ENCODE measurements at regions of chr2 and their contacts with region 1.

Region 1: GRCh38 chr2:43595603-43596412 is at the start of gene THADA:
- DNase-seq: peak; percentile 99
- ATAC-seq: peak; percentile 97
- H3K4me3 ChIP-seq: peak within 1 kb of the TSS; percentile 68 to 83 (median 75)
- H3K27ac ChIP-seq: peak within 1 kb of the TSS; percentile 93
- H3K4me1 ChIP-seq: peaks cover 36% of the 10 kb centered on the region
- H3K27me3 ChIP-seq: no peaks in the 10 kb centered on the region; a peak in 1 of 5 replicates
- CTCF ChIP-seq: no peak
- EP300 ChIP-seq: peak in 1 of 2 experiments; percentile 36; a peak in 1 of 4 replicates
- POLR2A ChIP-seq: peak; percentile 99 to 100
- RAD21 ChIP-seq: 0 out of 2 replicates have a peak, but pooled peaks have one; percentile 36
- total RNA-seq, gene THADA: 21.7 and 30.9 TPM in 2 replicates

Region 2: DNA sequence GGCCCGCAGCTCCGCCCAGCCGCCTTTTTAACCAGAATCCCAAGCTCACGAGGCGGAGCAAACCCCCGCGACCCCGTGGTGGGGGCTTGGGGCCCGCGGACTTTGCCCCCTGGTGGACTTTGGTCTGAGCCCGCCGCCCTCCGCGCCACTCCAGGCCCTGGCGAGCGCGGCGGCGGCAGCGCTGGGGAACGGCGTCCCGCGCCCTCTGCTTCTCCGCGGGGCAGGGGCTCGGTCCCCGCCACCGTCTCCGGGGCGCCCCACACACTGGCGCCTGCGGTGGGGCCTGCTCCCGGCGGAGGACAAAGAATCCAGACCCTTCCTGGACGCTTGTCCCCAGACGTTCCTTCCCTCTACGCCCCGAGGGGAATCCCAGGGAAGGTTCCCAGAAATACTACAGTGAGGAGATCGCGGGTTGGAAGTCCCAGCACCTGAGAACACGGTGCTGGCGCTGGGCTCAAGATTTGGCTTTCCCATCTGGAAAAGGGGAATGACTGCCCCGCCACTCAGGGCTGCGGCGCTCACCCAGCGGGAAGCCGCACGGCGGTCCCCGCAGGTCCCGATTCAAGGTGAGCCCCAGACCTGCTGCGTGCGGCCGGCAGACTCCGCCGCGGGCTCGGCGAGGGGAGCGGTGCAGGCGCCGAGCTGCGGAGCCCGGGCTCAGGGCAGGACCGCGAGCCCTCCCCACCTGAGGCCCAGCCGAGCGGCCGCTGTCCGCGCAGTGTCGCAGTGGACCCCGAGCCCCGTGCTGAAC is 803.0 kb before region 1 on chr2 and contains the start of gene HAAO:
- CTCF ChIA-PET with region 1: no interaction called
- POLR2A ChIA-PET with region 1: interaction called, 11 read pairs
- in situ Hi-C with region 1: no loop called
- intact Hi-C with region 1: no loop called
- DNase-seq: peak; percentile 91
- ATAC-seq: peak; percentile 71
- H3K4me3 ChIP-seq: peak within 1 kb of the TSS; percentile 98 to 99 (median 99)
- H3K27ac ChIP-seq: peak within 1 kb of the TSS; percentile 95
- H3K4me1 ChIP-seq: peaks cover 73% of the 10 kb centered on the region
- H3K27me3 ChIP-seq: no peaks in the 10 kb centered on the region; a peak in 1 of 5 replicates
- CTCF ChIP-seq: peak; percentile 55
- EP300 ChIP-seq: peak; percentile 91 to 95
- POLR2A ChIP-seq: peak in 1 of 2 experiments; percentile 97; a peak in 2 of 4 replicates
- RAD21 ChIP-seq: peak; percentile 88
- total RNA-seq, gene HAAO: 34.1 and 42.7 TPM in 2 replicates

Region 3: DNA sequence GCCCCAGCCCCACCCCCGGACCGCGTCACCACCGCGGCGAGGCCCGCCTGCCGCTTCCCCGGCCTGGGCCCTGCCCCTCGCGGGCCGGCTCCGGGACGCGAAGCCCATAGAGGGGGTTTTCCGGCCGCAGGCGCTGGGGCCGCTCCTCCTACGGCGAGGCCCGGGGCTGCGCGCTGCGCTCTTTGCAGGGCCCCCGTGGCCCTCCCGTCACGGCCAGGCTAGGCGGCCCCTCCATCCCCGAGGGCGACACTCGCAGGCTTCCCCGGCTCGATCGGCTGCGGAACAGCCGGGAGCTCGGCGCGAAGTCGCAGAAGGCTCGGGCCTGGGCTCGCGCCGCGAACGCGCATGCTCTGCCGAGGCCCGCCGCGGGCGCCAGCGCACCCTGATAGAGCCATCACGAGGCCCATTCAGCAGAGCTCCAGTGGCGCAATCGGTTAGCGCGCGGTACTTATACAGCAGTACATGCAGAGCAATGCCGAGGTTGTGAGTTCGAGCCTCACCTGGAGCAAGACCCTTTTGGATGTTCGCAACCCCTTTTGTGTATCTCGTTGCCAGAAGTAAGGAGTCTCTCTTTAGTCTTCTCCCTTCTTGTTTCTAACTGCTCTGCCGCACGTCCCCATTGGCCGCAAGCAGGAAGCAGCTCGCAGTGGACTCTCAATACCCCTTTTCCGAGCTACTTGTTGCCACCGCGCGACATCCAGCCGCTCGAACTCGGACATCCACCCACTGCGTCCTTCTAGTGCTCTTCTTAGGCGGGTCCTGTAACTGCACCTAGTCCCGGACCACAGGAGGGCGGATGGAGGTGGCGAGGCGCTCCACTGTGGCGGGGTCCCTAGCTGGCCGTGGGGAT is 785.5 kb before region 1 on chr2:
- CTCF ChIA-PET with region 1: no interaction called
- POLR2A ChIA-PET with region 1: interaction called, 21 read pairs
- in situ Hi-C with region 1: no loop called
- intact Hi-C with region 1: loop called (anchors 2 kb)
- DNase-seq: peak; percentile 94
- ATAC-seq: peak; percentile 84
- H3K4me3 ChIP-seq: peak overlapping the region; percentile 79 to 93 (median 80)
- H3K27ac ChIP-seq: peak overlapping the region; percentile 98
- H3K4me1 ChIP-seq: peaks cover 19% of the 10 kb centered on the region
- H3K27me3 ChIP-seq: no peaks in the 10 kb centered on the region; a peak in 2 of 5 replicates
- CTCF ChIP-seq: 0 out of 2 replicates have a peak, but pooled peaks have one; percentile 31
- EP300 ChIP-seq: peak; percentile 34 to 36; a peak in 2 of 4 replicates
- POLR2A ChIP-seq: peak; percentile 82 to 95
- RAD21 ChIP-seq: peak; percentile 52; the same call in 1 of the 2 replicates

Region 4: GRCh38 chr2:43576981-43577892 is 18.6 kb before region 1 on chr2:
- CTCF ChIA-PET with region 1: no interaction called
- POLR2A ChIA-PET with region 1: interaction called, 16 read pairs
- in situ Hi-C with region 1: no loop called
- intact Hi-C with region 1: no loop called
- DNase-seq: peak; percentile 63
- ATAC-seq: 0 out of 3 replicates have a peak, but pooled peaks have one; percentile 33
- H3K4me3 ChIP-seq: no peak overlapping the region
- H3K27ac ChIP-seq: no peak overlapping the region
- H3K4me1 ChIP-seq: no peaks in the 10 kb centered on the region
- H3K27me3 ChIP-seq: no peaks in the 10 kb centered on the region
- CTCF ChIP-seq: peak; percentile 68
- EP300 ChIP-seq: no peak
- POLR2A ChIP-seq: no peak
- RAD21 ChIP-seq: 0 out of 2 replicates have a peak, but pooled peaks have one; percentile 14

Region 5: DNA sequence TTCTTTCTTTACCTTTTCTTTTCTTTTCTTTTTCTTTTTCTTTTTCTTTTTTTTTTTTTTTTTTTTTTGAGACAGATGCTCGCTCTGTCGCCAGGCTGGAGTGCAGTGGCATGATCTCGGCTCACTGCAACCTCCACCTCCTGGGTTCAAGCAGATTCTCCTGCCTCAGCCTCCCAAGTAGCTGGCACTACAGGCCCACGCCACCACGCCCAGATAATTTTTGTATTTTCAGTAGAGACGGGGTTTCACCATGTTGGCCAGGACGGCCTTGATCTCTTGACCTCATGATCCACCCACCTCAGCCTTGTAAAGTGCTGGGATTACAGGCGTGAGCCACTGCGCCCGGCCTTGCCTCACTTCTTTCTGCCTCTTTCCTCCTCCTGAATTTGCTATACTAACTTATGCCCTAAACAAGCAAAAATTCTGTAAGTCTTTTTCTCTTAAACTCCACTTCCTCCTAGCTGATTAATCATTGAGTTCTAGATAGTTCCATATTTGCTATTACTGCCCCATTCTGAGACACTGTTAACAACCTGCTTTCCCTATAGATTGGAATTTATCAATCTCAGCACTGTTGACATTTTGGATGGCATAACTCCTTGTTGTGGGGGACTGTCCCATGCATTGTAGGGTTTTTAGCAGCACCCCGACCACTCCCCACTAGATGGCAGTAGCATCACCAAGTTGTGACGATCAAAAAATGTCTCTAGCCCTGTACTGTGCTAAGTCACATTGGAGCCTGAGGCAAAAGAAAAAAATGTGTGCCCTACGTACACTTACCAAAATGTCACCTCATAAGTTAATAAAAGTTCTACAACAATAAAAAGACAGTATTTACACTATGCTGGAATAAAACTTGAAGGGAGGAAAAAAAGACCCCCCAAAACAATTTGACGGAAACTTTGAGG is 16.4 kb after region 1 on chr2:
- CTCF ChIA-PET with region 1: interaction called, 29 read pairs
- POLR2A ChIA-PET with region 1: interaction called, 14 read pairs
- in situ Hi-C with region 1: no loop called
- intact Hi-C with region 1: loop called (anchors 1 kb)
- DNase-seq: peak; percentile 73
- ATAC-seq: peak; percentile 87
- H3K4me3 ChIP-seq: peak overlapping the region; percentile 24 to 59 (median 43); a peak in 5 of 6 replicates
- H3K27ac ChIP-seq: peak overlapping the region; percentile 21
- H3K4me1 ChIP-seq: peaks cover 48% of the 10 kb centered on the region
- H3K27me3 ChIP-seq: 0 out of 5 replicates have a peak, but pooled peaks cover 0 to 2% of the 10 kb centered on the region in 2 experiments
- CTCF ChIP-seq: peak; percentile 93
- EP300 ChIP-seq: no peak
- POLR2A ChIP-seq: no peak
- RAD21 ChIP-seq: peak; percentile 73

Region 6: GRCh38 chr2:43637030-43637803 is 41.4 kb after region 1 on chr2 and contains the start of gene PLEKHH2:
- CTCF ChIA-PET with region 1: no interaction called
- POLR2A ChIA-PET with region 1: interaction called, 14 read pairs
- in situ Hi-C with region 1: no loop called
- intact Hi-C with region 1: no loop called
- DNase-seq: peak; percentile 77
- ATAC-seq: peak; percentile 98
- H3K4me3 ChIP-seq: peak within 1 kb of the TSS; percentile 77 to 87 (median 86)
- H3K27ac ChIP-seq: no peak within 1 kb of the TSS
- H3K4me1 ChIP-seq: peaks cover 51% of the 10 kb centered on the region
- H3K27me3 ChIP-seq: peaks cover 0 to 28% of the 10 kb centered on the region in 2 experiments; a peak in 3 of 5 replicates
- CTCF ChIP-seq: peak; percentile 18; the same call in 1 of the 2 replicates
- EP300 ChIP-seq: no peak
- POLR2A ChIP-seq: no peak
- RAD21 ChIP-seq: no peak
- total RNA-seq, gene PLEKHH2: 0.52 and 1.1 TPM in 2 replicates

Region 7: GRCh38 chr2:43773876-43774613 is 178.2 kb after region 1 on chr2 and contains the start of gene DYNC2LI1:
- CTCF ChIA-PET with region 1: no interaction called
- POLR2A ChIA-PET with region 1: interaction called, 13 read pairs
- in situ Hi-C with region 1: no loop called
- intact Hi-C with region 1: no loop called
- DNase-seq: peak; percentile 83
- ATAC-seq: peak; percentile 99
- H3K4me3 ChIP-seq: peak within 1 kb of the TSS; percentile 86 to 94 (median 89)
- H3K27ac ChIP-seq: peak within 1 kb of the TSS; percentile 16
- H3K4me1 ChIP-seq: peaks cover 11% of the 10 kb centered on the region
- H3K27me3 ChIP-seq: no peaks in the 10 kb centered on the region; a peak in 1 of 5 replicates
- CTCF ChIP-seq: no peak
- EP300 ChIP-seq: no peak
- POLR2A ChIP-seq: peak; percentile 35 to 66; a peak in 3 of 4 replicates
- RAD21 ChIP-seq: no peak
- total RNA-seq, gene DYNC2LI1: 23.2 and 27.9 TPM in 2 replicates

Measured in HepG2 (cell line).